T-cell (primary cell): ENCODE measurements at regions of chr11 and their contacts with region 1.

Region 1: DNA sequence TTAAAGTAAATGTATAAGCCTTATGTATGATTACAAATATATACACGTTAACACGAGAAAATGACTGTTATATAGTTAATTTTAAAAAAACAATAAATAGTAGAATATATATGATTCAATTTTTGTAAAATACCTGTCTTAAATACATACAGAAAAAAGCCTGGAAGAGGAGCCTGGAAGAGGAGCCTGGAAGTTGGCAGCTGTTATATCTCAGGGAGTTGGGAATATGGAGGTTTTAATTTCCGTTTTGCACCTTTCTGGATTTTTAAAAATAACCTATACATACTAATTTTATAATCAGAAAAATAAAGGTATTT is 111.6 kb downstream of the WT1 start:
- DNase-seq: no peak
- ATAC-seq: no peak
- H3K4me3 ChIP-seq: no peak overlapping the region
- H3K4me3 Mint-ChIP-seq: no peak overlapping the region
- H3K27ac ChIP-seq: no peak overlapping the region
- H3K27ac Mint-ChIP-seq: no peak overlapping the region
- H3K4me1 ChIP-seq: no peaks in the 10 kb centered on the region
- H3K4me1 Mint-ChIP-seq: no peaks in the 10 kb centered on the region
- H3K27me3 ChIP-seq: peaks cover 0 to 6% of the 10 kb centered on the region in 2 experiments
- H3K27me3 Mint-ChIP-seq: peaks cover 20% of the 10 kb centered on the region in 2 donors

Region 2: GRCh38 chr11:32340181-32340580 is 16.4 kb after region 1 on chr11:
- CTCF ChIA-PET with region 1: interaction called, 3 to 12 read pairs
- POLR2A ChIA-PET with region 1: no interaction called
- DNase-seq: no peak
- ATAC-seq: no peak
- H3K4me3 ChIP-seq: no peak overlapping the region
- H3K4me3 Mint-ChIP-seq: no peak overlapping the region
- H3K27ac ChIP-seq: no peak overlapping the region
- H3K27ac Mint-ChIP-seq: no peak overlapping the region
- H3K4me1 ChIP-seq: peaks cover 3 to 6% of the 10 kb centered on the region in 2 experiments
- H3K4me1 Mint-ChIP-seq: peaks cover 8 to 12% (median 11%) of the 10 kb centered on the region in 3 donors
- H3K27me3 ChIP-seq: peaks cover 0 to 7% of the 10 kb centered on the region in 2 experiments
- H3K27me3 Mint-ChIP-seq: peaks cover 19 to 21% of the 10 kb centered on the region in 2 donors

Region 3: GRCh38 chr11:32374261-32374711 is 50.5 kb after region 1 on chr11:
- CTCF ChIA-PET with region 1: no interaction called
- POLR2A ChIA-PET with region 1: no interaction called
- DNase-seq: peak in 4 of 35 experiments; percentile 1 to 17 (median 2)
- ATAC-seq: no peak
- H3K4me3 ChIP-seq: no peak overlapping the region
- H3K4me3 Mint-ChIP-seq: no peak overlapping the region
- H3K27ac ChIP-seq: no peak overlapping the region
- H3K27ac Mint-ChIP-seq: no peak overlapping the region
- H3K4me1 ChIP-seq: no peaks in the 10 kb centered on the region
- H3K4me1 Mint-ChIP-seq: no peaks in the 10 kb centered on the region
- H3K27me3 ChIP-seq: peaks cover 0 to 7% of the 10 kb centered on the region in 2 experiments
- H3K27me3 Mint-ChIP-seq: peaks cover 4 to 17% of the 10 kb centered on the region in 2 donors

Region 4: GRCh38 chr11:32792948-32793475 is 469.2 kb after region 1 on chr11:
- CTCF ChIA-PET with region 1: interaction called, 10 to 12 read pairs
- POLR2A ChIA-PET with region 1: no interaction called
- DNase-seq: peak in 34 of 35 experiments; percentile 3 to 72 (median 50)
- ATAC-seq: peak; percentile 59 to 75 (median 65)
- H3K4me3 ChIP-seq: no peak overlapping the region
- H3K4me3 Mint-ChIP-seq: peak overlapping the region in 2 of 3 donors; percentile 29 to 48
- H3K27ac ChIP-seq: no peak overlapping the region
- H3K27ac Mint-ChIP-seq: no peak overlapping the region
- H3K4me1 ChIP-seq: no peaks in the 10 kb centered on the region
- H3K4me1 Mint-ChIP-seq: peaks cover 0 to 10% (median 9%) of the 10 kb centered on the region in 3 donors
- H3K27me3 ChIP-seq: peaks cover 0 to 7% of the 10 kb centered on the region in 2 experiments
- H3K27me3 Mint-ChIP-seq: peaks cover 4 to 12% of the 10 kb centered on the region in 2 donors

Region 5: DNA sequence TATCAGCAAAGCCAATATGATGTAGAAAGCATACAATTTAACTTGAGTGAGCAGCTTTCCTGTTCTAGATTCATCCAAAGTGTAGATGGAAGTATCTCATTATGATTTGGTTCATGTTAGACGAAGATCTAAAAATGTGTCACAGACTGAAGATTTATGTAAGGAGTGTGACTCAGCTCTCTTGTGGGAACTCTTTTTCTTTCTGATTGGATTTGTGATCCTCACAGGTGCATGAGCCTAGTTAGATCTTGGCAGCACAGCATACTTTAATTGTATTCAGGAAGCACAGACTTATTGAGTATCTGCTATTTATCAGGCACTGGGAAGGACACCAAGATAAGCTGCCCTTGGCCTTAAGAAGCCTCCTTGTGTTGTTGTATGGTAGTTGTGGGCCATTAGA is 1229.7 kb after region 1 on chr11:
- CTCF ChIA-PET with region 1: interaction called in 1 of 2 experiments, 12 read pairs
- POLR2A ChIA-PET with region 1: no interaction called
- DNase-seq: no peak
- ATAC-seq: no peak
- H3K4me3 ChIP-seq: no peak overlapping the region
- H3K4me3 Mint-ChIP-seq: no peak overlapping the region
- H3K27ac ChIP-seq: no peak overlapping the region
- H3K27ac Mint-ChIP-seq: no peak overlapping the region
- H3K4me1 ChIP-seq: no peaks in the 10 kb centered on the region
- H3K4me1 Mint-ChIP-seq: no peaks in the 10 kb centered on the region
- H3K27me3 ChIP-seq: peaks cover 0 to 8% of the 10 kb centered on the region in 2 experiments
- H3K27me3 Mint-ChIP-seq: peaks cover 13 to 31% of the 10 kb centered on the region in 2 donors